ENCODE measurements at regions of chr14 and their contacts with region 1.

Region 1: DNA sequence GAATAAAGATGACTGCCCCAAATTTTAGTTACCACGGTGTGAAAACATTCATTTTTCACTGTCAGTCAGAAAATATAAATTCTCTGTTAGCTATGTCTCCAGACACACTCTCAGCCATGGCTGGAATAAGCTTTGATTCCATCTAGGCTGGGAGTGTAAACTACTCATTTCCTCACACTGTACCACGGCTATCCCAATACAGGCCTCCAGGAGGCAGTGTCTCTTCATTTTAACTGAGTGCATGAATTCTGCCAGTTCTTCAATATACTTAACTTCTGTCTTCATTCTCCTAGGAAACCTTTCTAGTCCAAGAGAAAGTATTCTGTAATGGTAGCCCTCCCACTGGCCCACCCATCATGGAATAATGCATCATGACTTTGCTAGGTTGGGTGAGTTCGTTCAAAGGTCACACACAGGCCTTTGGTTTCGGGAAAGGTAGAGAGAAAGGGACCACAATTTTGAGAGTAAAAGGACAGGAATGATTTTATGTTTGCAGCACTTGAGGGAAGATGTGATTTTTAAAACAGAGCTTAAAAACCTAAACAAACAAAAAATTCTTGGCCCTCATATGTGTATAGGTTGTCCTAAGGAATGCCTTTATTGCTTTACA is 381.1 kb downstream of the SEC23A start:
- DNase-seq: peak; percentile 52
- ATAC-seq: peak; percentile 73 to 88

Region 2: DNA sequence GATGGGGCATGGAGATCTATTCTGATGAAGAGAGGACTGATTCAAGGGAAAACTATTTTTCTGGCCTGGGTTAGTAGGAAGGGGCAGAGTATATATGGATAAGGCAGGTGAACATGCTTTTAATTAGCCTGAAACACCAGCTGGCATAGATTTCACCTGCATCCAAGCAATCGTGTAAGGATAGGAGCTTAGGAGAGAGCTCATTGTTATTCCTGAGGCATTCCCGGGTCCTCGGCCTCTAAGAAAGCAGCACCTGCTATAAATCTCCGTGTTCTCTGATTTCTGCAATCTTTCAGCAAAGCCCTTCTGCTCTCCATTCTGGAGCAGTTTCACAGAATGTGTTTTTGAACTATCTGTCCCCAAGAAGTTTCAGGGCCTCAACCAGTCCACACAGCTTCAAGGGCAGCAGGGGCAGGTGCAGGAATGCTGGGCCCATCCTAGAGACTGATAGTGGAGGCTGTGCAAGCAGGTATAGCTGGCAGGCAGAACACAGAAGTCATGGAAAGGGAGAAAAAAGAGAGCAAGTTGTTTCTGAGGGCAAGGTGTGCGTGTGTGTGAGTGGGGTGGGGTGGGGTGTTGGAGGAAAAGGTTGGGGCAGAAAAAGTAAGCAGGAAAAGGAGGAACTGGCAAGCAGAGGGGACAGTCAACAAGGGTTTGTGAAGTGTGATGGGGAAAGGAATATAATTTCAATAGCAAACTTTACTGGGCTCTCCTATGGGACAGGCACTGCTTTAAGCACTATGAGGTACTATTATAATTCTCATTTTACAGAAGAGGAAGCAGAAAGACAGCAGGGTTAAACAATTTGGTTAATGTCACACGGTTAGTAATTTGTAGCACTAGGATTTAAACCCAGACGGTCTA is 717.9 kb before region 1 on chr14:
- intact Hi-C with region 1: no loop called
- DNase-seq: no peak
- ATAC-seq: no peak

Region 3: GRCh38 chr14:38867561-38868150 is 145.7 kb after region 1 on chr14:
- intact Hi-C with region 1: loop called in 1 of 2 experiments (anchors 2 kb)
- DNase-seq: peak; percentile 77
- ATAC-seq: peak; percentile 83 to 92

Region 4: DNA sequence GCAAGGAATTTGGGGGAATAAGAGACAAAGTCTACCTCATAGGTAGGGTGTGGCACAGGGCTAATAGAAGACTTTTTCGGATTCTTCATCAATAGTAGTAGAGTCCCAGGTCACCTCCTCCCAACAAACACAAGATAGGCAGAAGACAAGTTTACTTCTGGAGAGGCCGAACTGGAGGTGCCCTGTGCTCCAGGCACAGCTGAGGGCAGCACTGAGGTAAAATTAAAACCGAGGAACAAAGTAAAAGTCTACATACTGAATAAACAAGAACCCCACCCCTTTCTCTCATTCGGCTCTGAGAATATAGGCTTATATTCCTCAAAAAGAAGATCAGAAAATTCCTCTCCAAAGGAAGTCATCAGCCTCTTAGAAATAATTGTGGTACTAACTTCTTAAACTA is 219.6 kb after region 1 on chr14:
- intact Hi-C with region 1: no loop called
- DNase-seq: no peak
- ATAC-seq: no peak

Region 5: GRCh38 chr14:39015360-39015961 is 293.5 kb after region 1 on chr14:
- intact Hi-C with region 1: loop called (anchors 5 to 10 kb)
- DNase-seq: no peak
- ATAC-seq: peak in 1 of 2 donors; percentile 56